Activated CD8-positive, alpha-beta memory T cell treated with anti-CD3 and anti-CD28 coated beads, Interleukin-2, amount 10 ng/mL, durations not matched to agents 7 days and 5 days (primary cell): ENCODE measurements at regions of chr3 and their contacts with region 1.

Region 1: GRCh38 chr3:18758047-18758704 is 333.0 kb upstream of the SATB1 start:
- DNase-seq: peak; percentile 49
- ATAC-seq: peak; percentile 97
- H3K4me3 Mint-ChIP-seq: no peak overlapping the region
- H3K27ac Mint-ChIP-seq: peak overlapping the region; percentile 75
- H3K4me1 Mint-ChIP-seq: peaks cover 42% of the 10 kb centered on the region
- H3K27me3 Mint-ChIP-seq: no peaks in the 10 kb centered on the region

Region 2: GRCh38 chr3:18444595-18445400 is 313.4 kb before region 1 on chr3:
- CTCF ChIA-PET with region 1: interaction called, 18 read pairs
- DNase-seq: peak; percentile 85
- ATAC-seq: peak; percentile 79
- H3K4me3 Mint-ChIP-seq: peak overlapping the region; percentile 99
- H3K27ac Mint-ChIP-seq: peak overlapping the region; percentile 99
- H3K4me1 Mint-ChIP-seq: peaks cover 49% of the 10 kb centered on the region
- H3K27me3 Mint-ChIP-seq: no peaks in the 10 kb centered on the region

Region 3: GRCh38 chr3:18559331-18559842 is 198.8 kb before region 1 on chr3:
- CTCF ChIA-PET with region 1: interaction called, 37 read pairs
- DNase-seq: peak; percentile 59
- ATAC-seq: peak; percentile 31
- H3K4me3 Mint-ChIP-seq: peak overlapping the region; percentile 37
- H3K27ac Mint-ChIP-seq: peak overlapping the region; percentile 91
- H3K4me1 Mint-ChIP-seq: peaks cover 64% of the 10 kb centered on the region
- H3K27me3 Mint-ChIP-seq: no peaks in the 10 kb centered on the region

Region 4: DNA sequence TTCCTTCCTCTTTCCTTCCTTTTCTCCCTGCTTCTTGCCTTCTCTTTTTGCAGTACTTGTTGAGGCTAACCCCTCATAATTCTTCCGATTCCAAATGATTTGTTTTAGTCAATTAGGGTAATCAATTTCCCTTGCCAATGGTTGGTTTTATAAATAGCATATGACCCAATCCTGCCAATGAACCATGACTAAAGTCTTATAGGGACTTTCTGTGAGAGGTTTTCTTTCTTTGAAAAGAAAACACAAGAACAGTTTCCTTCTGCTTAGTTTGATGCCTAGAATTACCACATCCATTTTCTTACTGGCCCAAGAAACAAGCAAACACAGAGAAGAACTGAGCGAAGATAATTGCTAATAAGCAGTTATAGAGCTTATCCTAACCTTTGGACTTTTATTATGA is 40.6 kb before region 1 on chr3:
- CTCF ChIA-PET with region 1: interaction called, 12 read pairs
- DNase-seq: no peak
- ATAC-seq: peak; percentile 31
- H3K4me3 Mint-ChIP-seq: peak overlapping the region; percentile 24
- H3K27ac Mint-ChIP-seq: peak overlapping the region; percentile 97
- H3K4me1 Mint-ChIP-seq: peaks cover 74% of the 10 kb centered on the region
- H3K27me3 Mint-ChIP-seq: no peaks in the 10 kb centered on the region

Region 5: GRCh38 chr3:18747383-18747782 is 10.8 kb before region 1 on chr3:
- CTCF ChIA-PET with region 1: interaction called, 22 read pairs
- DNase-seq: no peak
- ATAC-seq: no peak
- H3K4me3 Mint-ChIP-seq: no peak overlapping the region
- H3K27ac Mint-ChIP-seq: no peak overlapping the region
- H3K4me1 Mint-ChIP-seq: peaks cover 69% of the 10 kb centered on the region
- H3K27me3 Mint-ChIP-seq: no peaks in the 10 kb centered on the region